Pancreas (tissue), 10 donors: ENCODE measurements at regions of chr14 and their contacts with region 1.

Region 1: DNA sequence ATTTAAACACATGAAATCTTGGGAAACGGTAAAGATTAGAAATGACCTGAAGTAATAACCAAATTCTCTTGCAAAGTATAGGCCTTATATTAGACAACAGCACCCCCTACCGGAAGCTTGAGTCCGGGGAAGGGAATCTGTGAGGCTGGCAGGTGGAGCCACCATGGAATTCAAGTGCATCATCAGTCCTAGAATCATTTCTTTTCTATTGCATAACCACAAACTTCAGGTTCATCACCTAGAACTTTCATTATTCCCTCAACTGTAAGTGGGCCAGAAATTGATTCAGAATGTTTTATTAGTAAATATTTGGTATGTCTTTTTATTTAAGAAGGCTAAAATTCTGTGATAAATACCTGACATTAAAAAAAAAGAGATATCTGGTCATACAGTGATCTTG is 48.5 kb downstream of the AP5M1 start:
- DNase-seq: peak; percentile 56 to 77 (median 67)
- ATAC-seq: peak; percentile 48 to 90 (median 89)
- H3K4me3 ChIP-seq: no peak overlapping the region
- H3K27ac ChIP-seq: no peak overlapping the region
- H3K4me1 ChIP-seq: no peaks in the 10 kb centered on the region
- H3K27me3 ChIP-seq: no peaks in the 10 kb centered on the region
- CTCF ChIP-seq: peak; percentile 74 to 87 (median 82)

Region 2: DNA sequence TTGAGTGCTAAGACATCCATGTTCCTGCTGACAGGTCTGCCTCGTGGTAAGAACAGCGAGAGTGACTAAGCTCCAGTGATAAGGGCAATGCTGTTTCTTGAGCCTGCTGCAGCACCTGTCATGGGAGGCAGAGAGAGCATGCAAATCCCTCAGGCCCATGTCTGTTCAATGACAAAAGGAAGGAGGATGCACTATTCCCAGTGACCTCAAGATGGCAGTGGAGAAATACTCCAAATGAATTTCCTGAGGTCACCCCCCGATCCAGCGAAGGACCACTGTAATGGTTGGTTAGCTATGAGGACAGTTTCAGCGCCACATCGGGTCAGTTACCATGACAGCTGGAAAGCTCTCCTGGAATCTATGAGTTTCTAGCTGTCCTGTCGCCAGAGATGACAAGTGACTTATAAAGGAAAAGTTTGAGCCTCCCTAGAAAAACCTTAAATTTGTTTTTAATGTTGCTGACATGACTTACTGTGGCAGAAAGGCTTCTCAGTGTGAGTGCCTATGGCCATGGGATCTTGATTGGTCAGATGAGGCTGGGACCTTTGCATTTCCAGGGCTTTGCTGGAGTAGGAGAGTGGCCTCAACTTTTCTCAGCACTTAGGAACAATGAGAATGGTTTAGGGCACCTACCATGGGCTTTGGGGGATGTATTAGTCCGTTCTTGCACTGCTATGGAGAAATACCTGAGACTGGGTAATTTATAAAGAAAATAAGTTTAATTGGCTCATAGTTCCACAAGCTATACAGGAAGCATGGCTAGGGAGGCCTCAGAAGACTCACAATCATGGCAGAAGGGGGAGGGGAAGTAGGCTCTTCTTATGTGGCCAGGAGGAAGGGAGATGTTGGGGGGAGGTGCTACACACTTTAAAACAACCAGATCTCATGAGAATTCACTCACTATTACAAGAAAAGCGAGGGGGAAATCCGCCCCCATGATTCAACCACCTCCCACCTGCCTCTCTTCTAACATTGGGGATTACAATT is 825.7 kb before region 1 on chr14:
- intact Hi-C with region 1: loop called in 1 of 3 experiments (anchors 10 kb)
- DNase-seq: peak in 1 of 6 donors; percentile 31
- ATAC-seq: peak; percentile 56 to 87 (median 83)
- H3K4me3 ChIP-seq: no peak overlapping the region
- H3K27ac ChIP-seq: no peak overlapping the region
- H3K4me1 ChIP-seq: no peaks in the 10 kb centered on the region
- H3K27me3 ChIP-seq: no peaks in the 10 kb centered on the region
- CTCF ChIP-seq: peak; percentile 22 to 64 (median 46)

Region 3: GRCh38 chr14:57199921-57200320 is 117.4 kb before region 1 on chr14:
- intact Hi-C with region 1: no loop called
- DNase-seq: no peak
- ATAC-seq: no peak
- H3K4me3 ChIP-seq: no peak overlapping the region
- H3K27ac ChIP-seq: no peak overlapping the region
- H3K4me1 ChIP-seq: no peaks in the 10 kb centered on the region
- H3K27me3 ChIP-seq: no peaks in the 10 kb centered on the region
- CTCF ChIP-seq: no peak

Region 4: DNA sequence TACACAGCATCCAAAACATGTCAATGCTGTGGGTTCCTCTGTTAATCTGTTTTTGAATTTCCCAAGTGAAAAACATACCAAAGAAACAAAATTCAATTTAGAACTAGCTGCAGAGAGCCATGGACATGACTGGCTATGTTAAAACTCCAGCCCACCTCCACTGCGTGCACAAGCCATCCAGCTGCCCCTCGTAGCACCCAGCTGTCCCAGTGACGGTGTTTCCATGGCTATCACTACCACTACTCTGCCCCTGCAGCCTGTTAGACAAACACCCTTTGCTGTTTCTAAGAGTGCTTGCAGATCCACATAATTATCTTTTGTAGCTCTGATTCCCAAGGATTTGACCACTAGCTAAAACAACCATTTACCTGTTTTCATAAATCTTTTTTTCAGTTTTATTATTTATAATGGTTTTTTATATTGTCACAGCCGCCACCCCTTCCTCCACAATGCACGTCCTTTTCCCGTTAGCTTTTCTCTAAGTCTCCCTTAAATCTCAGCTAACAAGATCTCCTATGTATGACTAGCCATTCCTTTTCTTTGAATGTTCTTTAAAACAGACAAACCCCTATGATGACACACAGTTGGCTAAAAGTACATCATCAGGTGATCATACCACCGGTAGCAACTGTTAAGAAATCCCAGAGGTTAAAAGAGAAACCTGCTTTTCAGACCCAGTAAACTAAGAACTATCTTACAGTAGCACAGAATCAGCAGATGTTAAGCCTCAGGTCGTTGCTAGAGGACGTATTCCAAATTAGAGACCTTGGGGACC is 35.3 kb after region 1 on chr14:
- intact Hi-C with region 1: no loop called
- DNase-seq: no peak
- ATAC-seq: no peak
- H3K4me3 ChIP-seq: no peak overlapping the region
- H3K27ac ChIP-seq: no peak overlapping the region
- H3K4me1 ChIP-seq: no peaks in the 10 kb centered on the region
- H3K27me3 ChIP-seq: no peaks in the 10 kb centered on the region
- CTCF ChIP-seq: no peak